ENCODE measurements at regions of chr1 and their contacts with region 1.

Region 1: DNA sequence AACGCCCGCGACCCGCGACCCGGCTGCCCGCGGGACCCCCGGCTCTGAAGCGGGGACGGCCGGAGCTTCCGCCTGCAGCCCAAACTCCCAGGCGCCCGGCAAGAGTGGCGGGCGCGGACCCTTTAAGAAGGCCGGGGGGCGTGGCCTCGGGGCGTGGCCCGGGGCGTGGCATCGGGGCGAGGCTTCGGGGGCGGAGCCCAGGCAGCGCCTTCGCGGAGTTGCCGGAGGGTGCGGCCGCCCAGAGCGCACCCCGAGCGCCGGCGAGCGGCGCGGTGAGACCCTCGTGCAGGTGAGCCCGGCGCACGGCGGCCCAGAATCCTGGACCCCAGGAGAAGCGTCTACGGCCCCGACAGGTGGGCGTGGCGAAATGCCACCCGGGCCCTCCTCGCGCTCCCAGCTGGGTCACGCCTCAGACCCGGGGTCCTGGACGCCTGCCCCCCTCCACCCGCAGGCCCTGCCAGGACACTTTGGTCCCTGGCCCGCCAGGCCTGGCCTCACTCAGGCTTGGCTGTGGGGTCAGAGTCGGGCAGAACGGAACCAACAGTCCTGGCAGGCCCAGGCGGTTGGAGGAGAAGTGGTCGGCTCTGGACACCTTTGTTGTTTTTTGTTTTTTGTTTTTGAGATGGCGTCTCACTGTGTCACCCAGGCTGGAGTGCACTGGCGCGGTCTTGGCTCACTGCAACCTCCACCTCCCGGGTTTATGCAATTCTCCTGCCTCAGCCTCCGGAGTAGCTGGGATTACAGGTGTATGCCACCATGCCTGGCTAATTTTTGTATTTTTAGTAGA is 14.4 kb downstream of the RNF223 start:
- DNase-seq: peak; percentile 77
- H3K4me3 ChIP-seq: peak overlapping the region; percentile 46 to 60 (median 57)
- H3K27ac ChIP-seq: no peak overlapping the region
- H3K4me1 ChIP-seq: peaks cover 36% of the 10 kb centered on the region
- H3K27me3 ChIP-seq: no peaks in the 10 kb centered on the region
- CTCF ChIP-seq: no peak

Region 2: GRCh38 chr1:958823-959729 is 100.6 kb before region 1 on chr1 and contains the start of gene NOC2L:
- CTCF ChIA-PET with region 1: no interaction called
- dilution Hi-C with region 1: no loop called
- in situ Hi-C with region 1: no loop called
- intact Hi-C with region 1: no loop called
- DNase-seq: peak; percentile 89
- H3K4me3 ChIP-seq: peak within 1 kb of the TSS; percentile 76 to 95 (median 94)
- H3K27ac ChIP-seq: peak within 1 kb of the TSS; percentile 17
- H3K4me1 ChIP-seq: peaks cover 15% of the 10 kb centered on the region
- H3K27me3 ChIP-seq: no peaks in the 10 kb centered on the region
- CTCF ChIP-seq: no peak
- total RNA-seq, gene NOC2L: 62.0 to 124 TPM

Region 3: DNA sequence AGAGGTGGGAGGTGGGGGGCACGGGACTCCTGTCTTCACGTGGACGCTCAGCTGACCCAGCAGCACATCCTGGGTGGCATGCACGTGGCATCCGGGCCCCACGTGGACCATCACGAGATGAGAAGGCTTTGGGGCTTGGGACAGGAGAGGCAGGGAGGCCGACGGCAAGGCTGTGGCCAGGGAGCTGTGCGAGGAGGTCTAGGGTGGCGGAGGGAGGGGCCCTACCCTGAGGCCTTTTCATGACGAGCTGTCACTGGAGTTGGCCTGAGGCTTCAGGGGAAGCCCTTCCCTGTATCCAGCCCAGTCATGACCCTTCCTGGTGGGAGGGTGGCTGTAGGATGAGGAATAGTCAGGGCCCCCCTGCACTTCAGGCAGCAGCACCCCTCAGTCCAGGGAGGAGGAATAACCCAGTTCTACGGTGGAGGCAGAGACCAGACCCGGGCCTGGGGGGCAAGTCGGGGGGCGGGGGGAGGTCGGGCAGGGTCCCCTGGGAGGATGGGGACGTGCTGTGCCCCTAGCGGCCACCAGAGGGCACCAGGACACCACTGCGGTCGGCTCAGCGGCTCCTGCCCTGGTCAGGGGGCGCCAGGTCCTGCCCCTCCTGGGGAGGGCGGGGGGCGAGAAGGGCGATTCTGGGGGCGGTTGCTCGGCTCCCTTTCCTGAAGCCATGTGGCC is 75.8 kb before region 1 on chr1:
- CTCF ChIA-PET with region 1: interaction called, 12 read pairs
- dilution Hi-C with region 1: no loop called
- in situ Hi-C with region 1: no loop called
- intact Hi-C with region 1: loop called (anchors 1 kb)
- DNase-seq: no peak
- H3K4me3 ChIP-seq: no peak overlapping the region
- H3K27ac ChIP-seq: no peak overlapping the region
- H3K4me1 ChIP-seq: no peaks in the 10 kb centered on the region
- H3K27me3 ChIP-seq: peaks cover 2% of the 10 kb centered on the region
- CTCF ChIP-seq: peak; percentile 28 to 86

Region 4: DNA sequence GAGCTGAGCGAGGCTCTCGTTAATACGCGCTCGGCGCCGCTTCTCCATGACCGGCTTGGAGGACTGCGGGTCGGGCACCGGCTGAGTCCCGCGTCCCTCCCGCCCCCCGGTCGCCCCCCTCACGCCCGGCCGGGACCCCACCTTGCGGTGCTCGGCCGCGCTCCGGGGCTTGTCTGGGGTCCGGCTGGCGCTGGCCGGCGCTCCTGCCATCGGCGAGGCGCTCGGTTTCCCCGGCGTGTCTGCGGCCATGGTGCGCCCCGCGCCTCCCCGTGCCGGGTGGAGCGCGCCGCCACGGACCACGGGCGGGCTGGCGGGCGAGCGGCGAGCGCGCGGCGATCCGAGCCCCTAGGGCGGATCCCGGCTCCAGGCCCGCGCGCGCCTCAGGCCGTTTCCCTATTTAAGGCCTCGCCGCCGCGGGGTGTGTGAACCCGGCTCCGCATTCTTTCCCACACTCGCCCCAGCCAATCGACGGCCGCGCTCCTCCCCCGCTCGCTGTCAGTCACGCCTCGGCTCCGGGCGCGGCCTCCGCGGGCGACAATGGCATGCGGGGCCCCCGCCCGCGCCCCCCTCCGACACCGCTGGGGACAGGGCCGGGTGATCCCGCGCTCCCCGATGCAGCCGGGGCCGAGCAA is 59.8 kb before region 1 on chr1 and contains the start of gene HES4:
- CTCF ChIA-PET with region 1: interaction called, 4 read pairs
- dilution Hi-C with region 1: no loop called
- in situ Hi-C with region 1: no loop called
- intact Hi-C with region 1: loop called (anchors 5 kb)
- DNase-seq: peak; percentile 82
- H3K4me3 ChIP-seq: peak within 1 kb of the TSS; percentile 42 to 54 (median 50)
- H3K27ac ChIP-seq: peak within 1 kb of the TSS; percentile 45
- H3K4me1 ChIP-seq: peaks cover 30% of the 10 kb centered on the region
- H3K27me3 ChIP-seq: peaks cover 17% of the 10 kb centered on the region
- CTCF ChIP-seq: no peak
- total RNA-seq, gene HES4: 6.4 to 24.7 TPM

Region 5: GRCh38 chr1:1019122-1019999 is 40.3 kb before region 1 on chr1:
- CTCF ChIA-PET with region 1: interaction called, 13 read pairs
- dilution Hi-C with region 1: no loop called
- in situ Hi-C with region 1: no loop called
- intact Hi-C with region 1: loop called (anchors 2 kb)
- DNase-seq: peak; percentile 78
- H3K4me3 ChIP-seq: peak overlapping the region in 1 of 3 experiments; percentile 48
- H3K27ac ChIP-seq: no peak overlapping the region
- H3K4me1 ChIP-seq: peaks cover 34% of the 10 kb centered on the region
- H3K27me3 ChIP-seq: no peaks in the 10 kb centered on the region
- CTCF ChIP-seq: peak in 1 of 2 donors; percentile 54

Region 6: DNA sequence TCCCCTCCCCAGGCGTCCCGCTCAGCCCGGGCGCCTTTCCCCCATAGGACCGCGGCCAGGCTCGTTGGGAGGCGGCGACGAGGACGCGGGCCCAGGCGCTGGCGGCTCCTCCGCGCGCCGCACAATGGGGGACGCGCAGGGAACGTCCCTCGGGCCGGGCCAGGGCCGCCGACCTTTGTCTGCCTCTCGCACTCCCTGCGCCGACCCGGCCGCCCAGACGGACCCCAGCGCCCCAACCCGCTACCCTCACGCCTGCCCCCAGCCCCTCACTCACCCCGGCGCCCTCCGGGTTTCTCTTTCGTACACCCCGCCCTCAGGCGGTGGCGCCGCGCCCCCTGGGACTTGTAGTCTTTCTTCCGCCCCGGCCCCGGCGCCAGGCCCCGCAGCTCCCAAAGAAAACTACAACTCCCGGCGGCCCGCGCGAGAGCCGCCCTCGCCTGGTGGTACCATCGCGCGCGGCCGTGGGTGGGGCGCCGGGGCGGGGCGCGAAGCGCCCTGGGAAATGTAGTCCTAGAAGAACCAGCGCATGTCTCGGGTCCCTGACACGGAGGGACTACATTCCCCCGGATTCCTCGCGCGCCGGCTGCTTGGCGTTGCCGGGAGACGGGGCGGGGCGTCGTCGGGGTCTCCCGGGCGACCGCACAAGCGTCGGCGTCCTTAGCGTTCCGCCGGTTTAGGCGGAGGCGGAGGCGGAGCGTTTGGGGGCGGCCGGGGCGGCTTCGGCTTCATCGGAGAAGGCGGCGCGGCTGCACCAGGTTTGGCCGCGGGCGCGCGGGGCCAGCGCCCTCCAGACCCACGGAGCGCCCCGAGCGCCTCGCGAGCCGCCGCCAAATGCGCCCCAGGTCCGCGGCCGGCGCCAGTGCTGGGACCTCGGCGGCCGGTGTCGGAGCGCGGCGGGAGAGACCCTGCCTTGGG is 56.4 kb after region 1 on chr1 and contains the start of gene C1orf159:
- CTCF ChIA-PET with region 1: no interaction called
- dilution Hi-C with region 1: no loop called
- in situ Hi-C with region 1: no loop called
- intact Hi-C with region 1: loop called (anchors 5 kb)
- DNase-seq: peak; percentile 97
- H3K4me3 ChIP-seq: peak within 1 kb of the TSS; percentile 76 to 94 (median 83)
- H3K27ac ChIP-seq: peak within 1 kb of the TSS; percentile 51
- H3K4me1 ChIP-seq: no peaks in the 10 kb centered on the region
- H3K27me3 ChIP-seq: peaks cover 2% of the 10 kb centered on the region
- CTCF ChIP-seq: no peak
- total RNA-seq, gene C1orf159: 9.5 to 23.8 TPM

Region 7: DNA sequence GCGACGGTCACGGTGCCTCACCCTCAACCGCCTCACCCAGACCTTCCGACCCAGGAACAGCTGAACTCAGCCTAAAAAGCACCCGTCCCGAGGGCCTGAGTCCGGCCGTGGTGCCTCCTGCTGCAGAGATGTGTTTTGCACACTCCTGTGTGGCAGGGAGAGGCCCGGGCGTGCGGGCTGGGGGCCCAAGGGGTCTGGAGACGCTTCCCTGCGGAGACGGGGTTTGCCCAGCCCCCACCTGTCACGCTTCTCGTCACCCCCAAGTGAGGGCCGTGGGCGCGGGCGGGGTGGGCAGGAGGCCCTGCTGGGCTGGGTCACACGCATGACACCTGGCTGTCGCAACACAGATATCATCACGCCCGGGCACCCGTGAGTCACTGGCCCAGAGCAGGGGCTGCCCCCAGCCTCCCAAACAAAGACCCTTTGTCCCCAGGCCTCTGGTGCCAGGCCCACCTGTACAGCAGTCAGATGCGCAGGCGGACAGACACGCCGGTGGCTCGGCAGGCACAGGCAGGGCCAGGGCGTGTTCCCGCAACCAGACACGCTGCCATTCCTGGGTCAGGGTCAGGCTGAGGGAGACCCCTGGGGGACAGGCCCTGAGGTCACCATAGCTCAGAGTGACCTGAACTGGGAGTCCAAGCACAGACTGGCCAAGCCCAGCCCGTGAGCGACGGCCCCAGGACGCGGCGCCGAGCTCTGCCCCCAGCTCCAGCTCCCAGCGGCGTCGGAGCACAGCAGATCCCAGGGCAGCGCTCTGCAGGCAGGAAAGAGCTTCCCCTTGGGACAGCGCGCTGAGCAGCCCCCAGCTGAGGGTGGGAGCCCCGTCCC is 178.4 kb after region 1 on chr1:
- CTCF ChIA-PET with region 1: no interaction called
- dilution Hi-C with region 1: no loop called
- in situ Hi-C with region 1: no loop called
- intact Hi-C with region 1: no loop called
- DNase-seq: peak; percentile 79
- H3K4me3 ChIP-seq: peak overlapping the region in 1 of 3 experiments; percentile 14
- H3K27ac ChIP-seq: peak overlapping the region; percentile 25
- H3K4me1 ChIP-seq: peaks cover 34% of the 10 kb centered on the region
- H3K27me3 ChIP-seq: no peaks in the 10 kb centered on the region
- CTCF ChIP-seq: no peak

Region 8: DNA sequence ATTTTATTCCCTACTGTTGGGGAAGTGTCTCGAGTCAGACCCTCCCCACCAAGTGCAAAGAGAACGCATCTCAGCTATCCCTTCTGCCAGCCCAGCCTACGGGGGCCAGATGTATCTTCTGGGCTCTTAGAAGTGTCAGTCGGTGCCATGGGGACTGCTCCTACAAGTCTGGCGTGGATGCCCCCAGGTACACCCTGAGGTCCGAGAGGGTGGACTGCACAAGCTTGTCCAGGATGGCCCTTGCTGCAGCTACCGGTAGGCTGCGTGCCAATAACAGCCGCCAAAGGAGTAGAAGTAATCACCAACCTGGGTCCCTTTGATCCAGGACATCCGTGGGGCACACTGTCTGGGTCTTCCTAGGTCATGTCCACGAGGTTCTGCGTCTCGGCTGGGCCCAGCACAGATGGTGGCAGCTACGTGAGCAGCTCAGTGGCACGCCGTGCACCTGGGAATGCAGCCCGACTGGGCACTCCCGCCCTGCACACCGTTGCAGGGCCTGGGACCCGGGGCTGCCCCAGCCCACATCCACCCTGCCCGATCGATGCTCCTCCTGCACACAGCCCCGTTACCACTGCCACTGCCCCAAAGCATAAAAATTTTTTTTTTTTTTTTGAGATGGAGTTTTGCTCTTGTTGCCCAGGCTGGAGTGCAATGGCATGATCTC is 523.8 kb after region 1 on chr1:
- CTCF ChIA-PET with region 1: no interaction called
- dilution Hi-C with region 1: no loop called
- in situ Hi-C with region 1: no loop called
- intact Hi-C with region 1: no loop called
- DNase-seq: no peak
- H3K4me3 ChIP-seq: no peak overlapping the region
- H3K27ac ChIP-seq: no peak overlapping the region
- H3K4me1 ChIP-seq: no peaks in the 10 kb centered on the region
- H3K27me3 ChIP-seq: no peaks in the 10 kb centered on the region
- CTCF ChIP-seq: no peak